Activated CD4-positive, alpha-beta T cell treated with anti-CD3 and anti-CD28 coated beads for 36 hours (primary cell): ENCODE measurements at regions of chr6 and their contacts with region 1.

Region 1: GRCh38 chr6:53426667-53427270 is 78.0 kb upstream of the ELOVL5 start:
- DNase-seq: no peak
- ATAC-seq: peak; percentile 96
- H3K4me3 Mint-ChIP-seq: no peak overlapping the region
- H3K27ac Mint-ChIP-seq: peak overlapping the region; percentile 26
- H3K4me1 Mint-ChIP-seq: peaks cover 23% of the 10 kb centered on the region
- H3K27me3 Mint-ChIP-seq: peaks cover 11% of the 10 kb centered on the region

Region 2: GRCh38 chr6:53070806-53071205 is 356.0 kb before region 1 on chr6:
- CTCF ChIA-PET with region 1: no interaction called
- POLR2A ChIA-PET with region 1: no interaction called
- intact Hi-C with region 1: loop called in 1 of 2 experiments (anchors 1 kb)
- DNase-seq: peak; percentile 35
- ATAC-seq: peak; percentile 99
- H3K4me3 Mint-ChIP-seq: no peak overlapping the region
- H3K27ac Mint-ChIP-seq: peak overlapping the region; percentile 70
- H3K4me1 Mint-ChIP-seq: peaks cover 43% of the 10 kb centered on the region
- H3K27me3 Mint-ChIP-seq: no peaks in the 10 kb centered on the region

Region 3: GRCh38 chr6:53244958-53245357 is 181.8 kb before region 1 on chr6:
- CTCF ChIA-PET with region 1: no interaction called
- POLR2A ChIA-PET with region 1: no interaction called
- intact Hi-C with region 1: loop called in 1 of 2 experiments (anchors 5 kb)
- DNase-seq: peak; percentile 44
- ATAC-seq: peak; percentile 76
- H3K4me3 Mint-ChIP-seq: no peak overlapping the region
- H3K27ac Mint-ChIP-seq: no peak overlapping the region
- H3K4me1 Mint-ChIP-seq: peaks cover 24% of the 10 kb centered on the region
- H3K27me3 Mint-ChIP-seq: no peaks in the 10 kb centered on the region

Region 4: DNA sequence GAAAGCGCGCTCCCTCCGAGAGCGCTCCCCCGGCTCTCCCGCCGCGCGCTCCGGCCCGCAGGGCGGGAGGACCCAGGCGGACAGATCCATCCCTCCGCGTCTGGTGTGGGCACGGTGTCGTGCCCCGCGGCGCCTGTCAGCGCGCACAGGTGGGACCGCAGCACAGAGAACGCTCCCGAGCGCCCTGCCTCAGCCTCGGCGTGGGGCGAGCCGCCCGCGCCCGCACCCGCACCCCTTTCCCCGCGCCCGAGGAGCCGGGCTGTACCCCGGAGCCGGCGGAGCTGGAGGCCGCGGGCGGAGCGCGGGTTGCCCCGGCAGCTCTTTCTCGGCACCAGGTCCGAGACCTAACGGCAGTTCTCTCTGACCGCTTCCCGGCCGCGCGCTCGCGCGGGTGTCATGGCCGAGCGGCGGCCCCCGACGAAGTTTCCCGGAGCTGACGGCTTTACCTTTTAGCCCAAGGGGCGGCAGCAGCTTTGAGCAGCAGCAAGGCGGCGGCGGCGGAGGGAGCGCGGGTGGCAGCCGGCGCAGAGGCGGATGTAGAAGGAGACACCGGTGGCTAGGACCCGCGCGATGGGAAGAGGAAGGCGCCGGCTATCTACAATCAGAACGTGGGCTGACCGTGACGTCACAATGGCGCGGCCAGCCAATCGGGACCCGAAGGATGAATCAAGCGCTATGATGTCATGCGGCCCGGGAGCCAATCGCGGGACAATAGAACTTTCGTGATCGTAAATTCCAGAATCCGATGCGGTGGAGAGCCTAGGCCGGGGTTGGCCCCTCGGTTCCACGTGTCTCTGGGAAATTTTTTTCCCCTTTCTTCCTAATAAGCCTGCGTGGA is 78.2 kb before region 1 on chr6 and contains the start of gene ELOVL5:
- CTCF ChIA-PET with region 1: no interaction called
- POLR2A ChIA-PET with region 1: no interaction called
- intact Hi-C with region 1: loop called in 1 of 2 experiments (anchors 5 kb)
- DNase-seq: peak; percentile 99
- ATAC-seq: peak; percentile 79
- H3K4me3 Mint-ChIP-seq: peak within 1 kb of the TSS; percentile 93
- H3K27ac Mint-ChIP-seq: peak within 1 kb of the TSS; percentile 91
- H3K4me1 Mint-ChIP-seq: peaks cover 46% of the 10 kb centered on the region
- H3K27me3 Mint-ChIP-seq: no peaks in the 10 kb centered on the region
- total RNA-seq, gene ELOVL5: 98.1 to 106 TPM

Region 5: DNA sequence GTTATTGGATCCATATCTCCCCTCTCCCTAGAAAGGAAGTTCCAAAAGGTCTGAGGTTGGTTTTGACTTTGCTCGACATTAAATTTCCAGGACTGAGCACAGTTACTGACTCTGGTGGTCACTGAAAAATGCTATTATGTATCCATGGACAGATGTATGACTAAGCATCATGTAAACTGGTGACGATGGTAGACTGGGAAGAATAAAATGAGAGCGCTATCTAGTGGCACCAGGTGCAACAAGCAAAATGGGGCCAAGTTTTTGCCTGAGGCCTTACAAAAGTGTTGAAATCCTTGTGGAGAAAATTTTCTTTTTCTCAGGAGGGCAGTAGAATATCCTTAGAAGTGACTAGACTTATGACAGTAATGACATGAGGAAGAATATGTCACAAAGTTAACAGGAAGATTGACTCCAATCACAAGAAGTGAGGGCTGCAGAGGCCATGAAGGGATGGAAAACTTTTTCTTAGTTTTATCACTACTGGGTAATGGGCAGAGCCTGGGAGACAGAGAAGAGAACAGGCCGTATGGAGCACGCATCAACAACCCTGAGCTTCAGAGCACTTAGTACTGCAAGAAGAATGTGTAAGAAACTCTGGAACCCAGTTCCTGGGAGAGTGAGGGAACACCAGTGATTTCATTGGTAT is 10.9 kb after region 1 on chr6:
- CTCF ChIA-PET with region 1: interaction called, 9 read pairs
- POLR2A ChIA-PET with region 1: no interaction called
- intact Hi-C with region 1: loop called (anchors 1 kb)
- DNase-seq: peak; percentile 34
- ATAC-seq: peak; percentile 53
- H3K4me3 Mint-ChIP-seq: no peak overlapping the region
- H3K27ac Mint-ChIP-seq: no peak overlapping the region
- H3K4me1 Mint-ChIP-seq: peaks cover 28% of the 10 kb centered on the region
- H3K27me3 Mint-ChIP-seq: peaks cover 3% of the 10 kb centered on the region

Region 6: DNA sequence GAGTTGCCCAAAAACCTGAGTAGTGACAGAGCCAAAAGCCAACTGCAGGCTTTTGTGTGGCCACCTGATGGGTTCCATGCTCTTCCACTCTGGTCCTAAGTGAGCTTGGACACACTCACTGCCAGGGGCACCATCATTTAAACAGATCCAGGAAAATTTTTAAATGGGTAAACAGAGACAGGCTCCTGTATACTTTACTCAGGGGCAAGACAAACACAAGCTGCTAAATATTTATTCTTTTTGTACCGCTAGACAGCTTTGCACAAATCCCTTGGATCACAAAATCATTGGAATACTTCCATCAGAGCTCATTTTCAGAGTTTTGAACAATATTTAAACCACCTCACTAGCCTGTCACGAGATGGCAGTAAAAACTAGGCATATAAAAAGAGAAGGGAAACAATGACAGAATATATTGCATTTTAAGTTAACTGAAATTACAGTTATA is 86.8 kb after region 1 on chr6:
- CTCF ChIA-PET with region 1: no interaction called
- POLR2A ChIA-PET with region 1: no interaction called
- intact Hi-C with region 1: no loop called
- DNase-seq: no peak
- ATAC-seq: no peak
- H3K4me3 Mint-ChIP-seq: no peak overlapping the region
- H3K27ac Mint-ChIP-seq: no peak overlapping the region
- H3K4me1 Mint-ChIP-seq: no peaks in the 10 kb centered on the region
- H3K27me3 Mint-ChIP-seq: no peaks in the 10 kb centered on the region

Region 7: DNA sequence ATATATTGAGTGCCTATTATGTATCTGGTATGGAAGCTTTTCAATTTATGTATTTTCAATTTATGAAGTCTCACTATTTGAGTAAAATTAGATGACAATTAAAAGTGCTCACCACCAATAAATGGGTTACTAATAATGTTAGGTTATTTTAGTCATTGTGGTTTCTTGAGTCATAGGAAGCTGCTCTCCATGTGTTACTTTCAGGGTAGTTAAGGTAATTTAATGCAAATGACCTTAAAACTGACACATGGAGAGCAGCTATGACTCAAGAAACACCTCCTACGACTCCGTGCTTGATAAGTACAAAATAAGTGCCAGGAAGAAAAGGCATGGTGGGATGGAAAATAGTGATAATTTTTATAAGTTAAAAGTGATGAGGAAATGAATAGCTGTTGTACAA is 865.0 kb after region 1 on chr6:
- CTCF ChIA-PET with region 1: no interaction called
- POLR2A ChIA-PET with region 1: no interaction called
- intact Hi-C with region 1: no loop called
- DNase-seq: no peak
- ATAC-seq: peak; percentile 91
- H3K4me3 Mint-ChIP-seq: no peak overlapping the region
- H3K27ac Mint-ChIP-seq: no peak overlapping the region
- H3K4me1 Mint-ChIP-seq: peaks cover 10% of the 10 kb centered on the region
- H3K27me3 Mint-ChIP-seq: no peaks in the 10 kb centered on the region